ENCODE measurements at regions of chr19 and their contacts with region 1.

Region 1: DNA sequence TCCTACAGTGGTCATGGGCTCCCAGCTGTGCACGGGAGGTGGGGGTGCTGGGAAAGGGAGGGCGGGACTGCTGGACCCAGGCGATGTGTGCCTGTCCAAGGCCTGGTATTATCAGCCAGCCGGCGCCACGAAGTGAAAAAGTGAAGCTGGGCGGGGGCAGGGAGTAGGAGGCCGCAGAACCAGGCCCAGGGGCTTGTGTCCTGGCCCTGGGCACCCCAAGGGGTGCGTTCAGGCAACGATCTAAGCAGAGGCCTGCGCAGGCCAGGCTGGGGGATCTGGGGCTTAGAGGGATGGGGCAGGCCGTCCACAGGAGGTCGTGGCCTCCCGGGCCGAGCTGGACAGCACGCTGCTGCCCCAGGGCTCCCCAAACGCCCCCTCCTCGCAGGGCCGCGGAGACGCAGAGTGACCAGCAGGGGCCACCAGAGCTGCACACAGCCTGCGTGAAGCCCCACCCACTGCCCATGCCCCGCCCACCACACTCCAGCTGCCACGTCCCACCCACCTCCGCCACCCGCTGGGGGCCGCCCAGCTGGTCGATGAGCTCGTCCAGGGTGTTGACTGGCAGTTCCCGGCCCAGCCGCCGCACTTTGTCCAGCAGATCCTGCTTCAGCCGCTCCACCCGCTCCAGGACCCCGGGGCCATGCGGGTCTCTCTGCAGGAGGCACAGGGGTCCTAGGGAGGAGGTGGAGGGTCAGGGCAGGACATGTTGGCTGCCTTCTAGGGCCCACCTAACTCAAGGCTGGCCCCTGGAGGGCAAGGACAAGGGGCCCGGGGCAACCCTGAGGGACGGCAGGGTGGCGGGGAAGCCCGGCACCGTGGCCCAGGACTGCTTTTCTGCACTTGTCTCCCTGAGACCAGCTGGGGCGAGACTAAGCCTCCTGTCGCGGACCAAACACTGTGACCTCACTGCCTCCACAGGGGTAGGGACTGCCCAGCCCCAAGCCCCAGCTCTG is 9.5 kb downstream of the GPX4 start:
- DNase-seq: peak; percentile 100
- H3K4me3 ChIP-seq: no peak overlapping the region; a peak in 1 of 4 replicates
- H3K27ac ChIP-seq: peak overlapping the region; percentile 32 to 79; a peak in 3 of 4 replicates
- H3K4me1 ChIP-seq: peaks cover 5 to 7% of the 10 kb centered on the region in 2 experiments; a peak in 2 of 4 replicates
- H3K27me3 ChIP-seq: no peaks in the 10 kb centered on the region
- CTCF ChIP-seq: peak; percentile 84
- EP300 ChIP-seq: no peak
- RAD21 ChIP-seq: peak; percentile 78

Region 2: GRCh38 chr19:1010586-1011510 is 102.5 kb before region 1 on chr19:
- CTCF ChIA-PET with region 1: no interaction called
- POLR2A ChIA-PET with region 1: no interaction called
- DNase-seq: no peak
- H3K4me3 ChIP-seq: no peak overlapping the region
- H3K27ac ChIP-seq: no peak overlapping the region
- H3K4me1 ChIP-seq: no peaks in the 10 kb centered on the region
- H3K27me3 ChIP-seq: no peaks in the 10 kb centered on the region
- CTCF ChIP-seq: no peak
- EP300 ChIP-seq: no peak
- RAD21 ChIP-seq: no peak

Region 3: DNA sequence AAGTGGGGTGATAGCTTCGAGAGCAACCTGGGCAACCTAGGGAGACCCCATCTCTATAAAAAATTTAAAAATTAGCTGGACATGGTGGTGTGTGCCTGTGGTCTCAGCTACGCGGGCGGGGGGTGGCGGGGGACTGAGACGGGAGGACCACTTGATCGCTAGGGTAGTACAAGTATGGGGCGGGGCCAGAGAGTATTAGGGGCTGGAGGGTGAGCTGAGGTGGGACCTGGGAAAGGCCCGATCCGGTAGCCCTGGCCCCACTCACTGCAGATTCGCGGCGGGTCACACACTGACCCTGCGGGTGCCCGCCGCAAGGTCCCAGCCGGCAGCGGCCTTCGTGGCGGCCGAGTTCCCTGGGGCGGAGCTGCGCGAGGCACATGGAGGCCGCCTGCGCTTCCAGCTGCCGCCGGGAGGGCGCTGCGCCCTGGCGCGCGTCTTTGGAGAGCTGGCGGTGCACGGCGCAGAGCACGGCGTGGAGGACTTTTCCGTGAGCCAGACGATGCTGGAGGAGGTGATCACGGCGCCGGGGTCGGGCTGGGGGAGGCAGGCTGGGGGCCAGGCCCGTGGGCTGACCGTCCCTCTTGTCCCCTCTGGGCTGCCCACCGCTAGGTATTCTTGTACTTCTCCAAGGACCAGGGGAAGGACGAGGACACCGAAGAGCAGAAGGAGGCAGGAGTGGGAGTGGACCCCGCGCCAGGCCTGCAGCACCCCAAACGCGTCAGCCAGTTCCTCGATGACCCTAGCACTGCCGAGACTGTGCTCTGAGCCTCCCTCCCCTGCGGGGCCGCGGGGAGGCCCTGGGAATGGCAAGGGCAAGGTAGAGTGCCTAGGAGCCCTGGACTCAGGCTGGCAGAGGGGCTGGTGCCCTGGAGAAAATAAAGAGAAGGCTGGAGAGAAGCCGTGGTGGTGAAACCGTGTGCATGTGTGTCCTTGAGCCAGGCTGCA is 48.4 kb before region 1 on chr19:
- CTCF ChIA-PET with region 1: interaction called, 13 read pairs
- POLR2A ChIA-PET with region 1: no interaction called
- DNase-seq: peak; percentile 88
- H3K4me3 ChIP-seq: no peak overlapping the region
- H3K27ac ChIP-seq: no peak overlapping the region
- H3K4me1 ChIP-seq: peaks cover 0 to 20% of the 10 kb centered on the region in 2 experiments; a peak in 1 of 4 replicates
- H3K27me3 ChIP-seq: peaks cover 26% of the 10 kb centered on the region
- CTCF ChIP-seq: peak; percentile 55
- EP300 ChIP-seq: no peak
- RAD21 ChIP-seq: peak; percentile 42

Region 4: DNA sequence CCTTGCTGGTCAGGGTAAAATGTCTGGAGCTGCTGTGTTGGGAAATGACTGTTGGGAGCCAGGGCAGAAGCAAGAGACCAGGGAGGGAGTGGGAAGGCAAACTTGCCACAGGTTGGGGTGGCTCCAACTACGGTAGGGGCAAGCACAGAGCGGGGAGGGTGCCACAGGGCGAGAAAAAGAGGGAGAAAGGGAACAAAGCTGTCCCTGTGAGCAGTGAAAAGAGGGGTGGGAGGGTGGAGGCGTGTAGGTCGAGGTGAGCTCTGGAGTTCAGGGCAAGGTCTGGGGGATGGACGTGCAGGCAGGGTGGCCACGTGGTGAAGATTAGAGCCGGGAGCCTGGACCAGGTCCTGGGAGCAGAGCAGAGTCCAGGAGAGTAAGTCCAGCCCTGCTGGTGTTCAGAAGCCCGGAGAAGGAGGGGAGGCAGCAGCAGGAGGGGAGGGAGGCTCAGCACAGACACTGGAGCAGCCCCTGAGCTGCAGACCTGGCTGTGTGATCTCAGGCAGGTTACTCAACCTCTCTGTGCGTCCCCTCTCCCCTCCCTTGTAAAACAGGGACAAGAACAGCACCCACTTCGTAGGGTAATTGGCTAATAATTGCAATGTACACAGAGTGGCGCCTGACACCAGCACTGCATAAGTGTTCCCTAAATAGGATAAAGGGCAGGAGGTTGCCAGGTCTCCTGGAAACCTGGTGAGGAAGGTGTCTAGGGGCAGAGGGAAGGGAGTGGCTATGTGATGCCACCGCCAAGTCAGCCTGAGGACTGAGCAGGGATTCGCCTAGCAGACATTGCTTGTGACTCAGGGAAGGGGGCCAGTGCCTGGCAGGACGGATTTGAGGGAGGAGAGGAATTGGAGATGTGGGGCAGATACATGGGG is 14.9 kb before region 1 on chr19:
- CTCF ChIA-PET with region 1: interaction called, 44 read pairs
- POLR2A ChIA-PET with region 1: interaction called, 15 read pairs
- DNase-seq: no peak
- H3K4me3 ChIP-seq: no peak overlapping the region
- H3K27ac ChIP-seq: no peak overlapping the region
- H3K4me1 ChIP-seq: peaks cover 22 to 29% of the 10 kb centered on the region in 2 experiments; a peak in 3 of 4 replicates
- H3K27me3 ChIP-seq: no peaks in the 10 kb centered on the region
- CTCF ChIP-seq: no peak
- EP300 ChIP-seq: no peak
- RAD21 ChIP-seq: no peak

Region 5: GRCh38 chr19:1183534-1184172 is 70.3 kb after region 1 on chr19:
- CTCF ChIA-PET with region 1: interaction called, 12 read pairs
- POLR2A ChIA-PET with region 1: no interaction called
- DNase-seq: peak; percentile 10
- H3K4me3 ChIP-seq: no peak overlapping the region
- H3K27ac ChIP-seq: no peak overlapping the region
- H3K4me1 ChIP-seq: peaks cover 0 to 5% of the 10 kb centered on the region in 2 experiments; a peak in 1 of 4 replicates
- H3K27me3 ChIP-seq: no peaks in the 10 kb centered on the region
- CTCF ChIP-seq: no peak
- EP300 ChIP-seq: no peak
- RAD21 ChIP-seq: no peak

Region 6: GRCh38 chr19:1213391-1214286 is 100.3 kb after region 1 on chr19:
- CTCF ChIA-PET with region 1: interaction called, 36 read pairs
- POLR2A ChIA-PET with region 1: no interaction called
- DNase-seq: peak; percentile 57
- H3K4me3 ChIP-seq: 0 out of 4 replicates have a peak overlapping the region, but pooled peaks of 1 of the 2 experiments have one; percentile 13
- H3K27ac ChIP-seq: peak overlapping the region; percentile 90 to 92
- H3K4me1 ChIP-seq: peaks cover 35 to 39% of the 10 kb centered on the region in 2 experiments; a peak in 3 of 4 replicates
- H3K27me3 ChIP-seq: no peaks in the 10 kb centered on the region
- CTCF ChIP-seq: no peak
- EP300 ChIP-seq: no peak
- RAD21 ChIP-seq: no peak

Region 7: DNA sequence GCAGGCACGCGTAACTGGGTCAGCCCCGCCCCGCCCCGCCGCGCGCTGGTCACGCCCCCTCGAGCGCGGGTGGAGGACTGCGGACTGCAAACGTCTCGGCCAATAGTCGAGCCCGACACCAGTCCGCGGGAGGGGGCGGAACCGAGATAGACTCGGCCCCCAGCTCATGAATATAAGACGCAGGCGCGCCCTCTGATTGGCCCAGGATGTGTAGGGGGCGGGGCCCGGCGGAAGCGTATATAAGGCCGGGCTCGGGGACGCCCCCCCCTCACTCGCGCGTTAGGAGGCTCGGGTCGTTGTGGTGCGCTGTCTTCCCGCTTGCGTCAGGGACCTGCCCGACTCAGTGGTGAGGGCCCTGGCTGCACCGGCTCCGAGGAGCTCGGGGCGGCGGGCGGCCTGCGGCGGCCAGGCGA is 155.8 kb after region 1 on chr19 and contains the start of gene CIRBP:
- CTCF ChIA-PET with region 1: interaction called, 16 read pairs
- POLR2A ChIA-PET with region 1: interaction called, 3 read pairs
- DNase-seq: peak; percentile 97
- H3K4me3 ChIP-seq: peak within 1 kb of the TSS; percentile 78 to 86
- H3K27ac ChIP-seq: peak within 1 kb of the TSS; percentile 91 to 98
- H3K4me1 ChIP-seq: peaks cover 47 to 62% of the 10 kb centered on the region in 2 experiments; a peak in 3 of 4 replicates
- H3K27me3 ChIP-seq: no peaks in the 10 kb centered on the region
- CTCF ChIP-seq: no peak
- EP300 ChIP-seq: no peak
- RAD21 ChIP-seq: no peak
- polyA plus RNA-seq, gene CIRBP: 762 and 857 TPM in 2 replicates

Measured in SK-N-SH (cell line).